Activated CD4-positive, alpha-beta T cell treated with anti-CD3 and anti-CD28 coated beads, Interleukin-2, amount 10 ng/mL, durations not matched to agents 24 days and 14 days (primary cell): ENCODE measurements at regions of chr18 and their contacts with region 1.

Region 1: DNA sequence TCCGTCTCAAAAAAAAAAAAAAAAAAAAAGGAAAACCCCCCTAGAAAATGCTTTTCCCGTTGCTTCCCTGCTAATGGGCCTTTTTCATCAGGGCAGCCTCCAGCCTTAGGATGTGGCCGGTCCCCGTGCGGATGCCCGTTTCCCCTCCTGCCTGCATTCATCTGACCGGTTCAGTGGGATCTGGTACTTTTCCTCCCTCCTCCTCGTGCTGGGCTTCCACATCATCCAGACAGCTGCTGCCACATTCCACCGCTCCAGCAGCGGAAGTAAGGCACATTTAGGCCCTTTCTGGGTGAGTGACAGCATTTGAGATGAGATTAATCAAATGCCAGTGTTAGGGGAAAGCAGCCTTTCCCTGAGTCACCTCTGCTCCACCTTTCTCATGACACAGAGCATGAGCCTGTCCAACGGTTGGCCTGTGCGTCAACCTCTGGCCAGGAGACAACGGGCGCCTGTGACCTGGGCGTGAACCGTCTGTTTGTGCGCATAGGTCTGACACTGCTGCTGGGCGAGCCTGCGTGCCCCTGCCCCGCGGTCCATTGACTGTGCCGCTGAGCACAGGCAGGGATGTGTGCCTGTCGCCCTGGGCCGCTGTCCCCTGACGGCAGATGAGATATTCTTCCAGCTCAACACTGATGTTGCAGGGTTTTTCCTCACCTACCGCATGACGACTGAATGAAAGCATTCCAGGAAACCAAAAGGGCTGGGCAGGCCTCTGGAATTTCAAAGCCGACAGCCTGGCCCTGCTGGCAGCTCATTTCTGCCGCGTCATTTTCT is 174.0 kb downstream of the TGIF1 start:
- DNase-seq: peak; percentile 66
- H3K4me3 Mint-ChIP-seq: peak overlapping the region; percentile 72
- H3K27ac Mint-ChIP-seq: peak overlapping the region; percentile 91
- H3K4me1 Mint-ChIP-seq: peaks cover 37% of the 10 kb centered on the region
- H3K27me3 Mint-ChIP-seq: no peaks in the 10 kb centered on the region

Region 2: GRCh38 chr18:3525870-3526420 is 98.0 kb before region 1 on chr18:
- intact Hi-C with region 1: no loop called
- DNase-seq: peak; percentile 79
- H3K4me3 Mint-ChIP-seq: peak overlapping the region; percentile 19
- H3K27ac Mint-ChIP-seq: peak overlapping the region; percentile 1
- H3K4me1 Mint-ChIP-seq: peaks cover 13% of the 10 kb centered on the region
- H3K27me3 Mint-ChIP-seq: peaks cover 1% of the 10 kb centered on the region

Region 3: GRCh38 chr18:3634250-3634939 is 10.4 kb after region 1 on chr18:
- intact Hi-C with region 1: loop called (anchors 1 kb)
- DNase-seq: no peak
- H3K4me3 Mint-ChIP-seq: no peak overlapping the region
- H3K27ac Mint-ChIP-seq: peak overlapping the region; percentile 14
- H3K4me1 Mint-ChIP-seq: peaks cover 14% of the 10 kb centered on the region
- H3K27me3 Mint-ChIP-seq: no peaks in the 10 kb centered on the region

Region 4: GRCh38 chr18:3652380-3653262 is 28.7 kb after region 1 on chr18:
- intact Hi-C with region 1: loop called (anchors 1 kb)
- DNase-seq: peak; percentile 77
- H3K4me3 Mint-ChIP-seq: peak overlapping the region; percentile 54
- H3K27ac Mint-ChIP-seq: peak overlapping the region; percentile 92
- H3K4me1 Mint-ChIP-seq: peaks cover 41% of the 10 kb centered on the region
- H3K27me3 Mint-ChIP-seq: no peaks in the 10 kb centered on the region

Region 5: GRCh38 chr18:3665780-3666525 is 42.0 kb after region 1 on chr18:
- intact Hi-C with region 1: loop called (anchors 1 kb)
- DNase-seq: peak; percentile 92
- H3K4me3 Mint-ChIP-seq: peak overlapping the region; percentile 61
- H3K27ac Mint-ChIP-seq: peak overlapping the region; percentile 53
- H3K4me1 Mint-ChIP-seq: peaks cover 33% of the 10 kb centered on the region
- H3K27me3 Mint-ChIP-seq: peaks cover 9% of the 10 kb centered on the region

Region 6: DNA sequence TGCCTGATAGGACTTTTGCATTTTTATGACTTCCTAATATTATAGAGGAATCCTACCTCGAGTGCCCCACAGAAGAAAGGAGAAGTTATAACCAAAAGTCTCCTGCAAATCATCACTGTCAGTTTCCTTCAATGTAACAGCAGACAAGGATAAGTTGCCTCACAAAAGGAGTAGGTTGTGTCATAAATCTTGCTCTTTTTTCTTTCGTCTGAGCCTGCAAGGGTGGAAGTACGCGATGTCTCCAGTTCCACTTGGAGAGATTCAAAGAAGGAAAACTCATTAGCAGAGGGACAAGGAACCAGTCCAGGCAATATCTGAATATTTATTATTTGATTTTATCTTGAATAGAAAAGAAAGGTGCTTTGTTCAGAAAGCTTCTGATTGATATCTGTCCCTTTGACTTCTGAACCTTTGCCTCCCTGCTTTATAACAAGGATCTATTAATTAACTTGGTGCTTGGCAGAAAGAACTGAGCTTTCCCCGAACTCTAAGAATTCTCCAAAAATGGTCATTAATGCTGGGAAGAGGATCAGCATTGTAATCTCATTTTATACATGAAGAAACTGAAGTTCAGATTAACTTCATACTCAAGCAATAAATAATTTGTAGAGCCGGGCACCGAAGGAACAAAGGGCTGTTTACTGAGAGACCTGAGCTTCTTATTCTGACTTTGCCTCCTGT is 98.5 kb after region 1 on chr18:
- intact Hi-C with region 1: no loop called
- DNase-seq: no peak
- H3K4me3 Mint-ChIP-seq: no peak overlapping the region
- H3K27ac Mint-ChIP-seq: no peak overlapping the region
- H3K4me1 Mint-ChIP-seq: no peaks in the 10 kb centered on the region
- H3K27me3 Mint-ChIP-seq: peaks cover 30% of the 10 kb centered on the region